CD4-positive, alpha-beta memory T cell (primary cell): ENCODE measurements at regions of chr2 and their contacts with region 1.

Region 1: GRCh38 chr2:72993147-72993932 is 76.0 kb downstream of the EMX1 start:
- DNase-seq: peak; percentile 43 to 57 (median 49)
- H3K4me3 ChIP-seq: no peak overlapping the region
- H3K4me3 Mint-ChIP-seq: no peak overlapping the region
- H3K27ac ChIP-seq: no peak overlapping the region
- H3K27ac Mint-ChIP-seq: no peak overlapping the region
- H3K4me1 ChIP-seq: no peaks in the 10 kb centered on the region
- H3K4me1 Mint-ChIP-seq: no peaks in the 10 kb centered on the region
- H3K27me3 ChIP-seq: no peaks in the 10 kb centered on the region
- H3K27me3 Mint-ChIP-seq: no peaks in the 10 kb centered on the region

Region 2: GRCh38 chr2:73156539-73157124 is 163.3 kb after region 1 on chr2:
- CTCF ChIA-PET with region 1: interaction called, 14 read pairs
- POLR2A ChIA-PET with region 1: no interaction called
- intact Hi-C with region 1: no loop called
- DNase-seq: peak in 3 of 5 donors; percentile 16 to 26 (median 20)
- H3K4me3 ChIP-seq: no peak overlapping the region
- H3K4me3 Mint-ChIP-seq: no peak overlapping the region
- H3K27ac ChIP-seq: no peak overlapping the region
- H3K27ac Mint-ChIP-seq: peak overlapping the region in 2 of 7 donors; percentile 18 to 62
- H3K4me1 ChIP-seq: no peaks in the 10 kb centered on the region
- H3K4me1 Mint-ChIP-seq: peaks cover 0 to 6% (median 0%) of the 10 kb centered on the region in 4 donors
- H3K27me3 ChIP-seq: no peaks in the 10 kb centered on the region
- H3K27me3 Mint-ChIP-seq: peaks cover 27 to 35% of the 10 kb centered on the region in 2 donors

Region 3: DNA sequence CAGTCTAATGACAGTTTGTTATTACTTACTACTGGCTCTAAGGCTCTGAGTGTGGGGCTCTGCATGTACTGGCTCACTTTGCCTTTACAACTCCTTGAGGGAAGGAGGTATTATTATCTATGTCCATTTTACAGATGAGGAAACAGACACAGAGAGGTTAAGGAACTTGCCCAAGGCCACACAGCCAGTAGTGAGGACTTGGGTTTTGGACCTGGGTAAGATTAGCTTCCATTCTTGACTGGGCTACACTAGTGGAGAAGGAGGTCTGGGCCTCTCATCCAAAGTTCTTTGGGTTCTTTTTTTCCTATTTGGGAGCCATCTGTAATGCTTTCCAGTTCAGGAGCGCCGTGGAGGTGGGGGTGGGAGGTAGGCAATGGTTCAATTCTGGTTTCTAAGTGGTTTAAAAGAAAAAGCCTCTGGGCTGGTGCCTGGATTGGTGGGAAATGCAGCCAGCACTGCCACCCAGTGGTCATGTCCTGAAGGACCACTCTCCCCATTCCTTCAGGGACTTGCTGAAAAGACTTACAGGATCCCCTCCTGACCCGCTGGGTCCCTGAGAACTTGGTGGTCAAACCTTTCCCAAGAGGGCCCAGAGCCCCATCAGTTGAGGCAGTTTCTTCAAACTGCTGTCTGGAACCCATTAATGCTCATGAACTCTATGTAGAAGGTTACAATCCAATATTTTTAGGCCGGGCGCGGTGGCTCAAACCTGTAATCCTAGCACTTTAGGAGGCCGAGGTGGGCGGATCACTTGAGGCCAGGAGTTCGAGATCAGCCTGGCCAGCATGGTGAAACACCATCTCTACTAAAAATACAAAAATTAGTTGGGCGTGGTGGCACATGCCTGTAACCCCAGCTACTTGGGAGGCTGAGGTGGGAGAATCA is 170.4 kb after region 1 on chr2:
- CTCF ChIA-PET with region 1: interaction called, 14 read pairs
- POLR2A ChIA-PET with region 1: no interaction called
- intact Hi-C with region 1: loop called (anchors 1 kb)
- DNase-seq: peak in 4 of 5 donors; percentile 54 to 59 (median 57)
- H3K4me3 ChIP-seq: no peak overlapping the region
- H3K4me3 Mint-ChIP-seq: no peak overlapping the region
- H3K27ac ChIP-seq: no peak overlapping the region
- H3K27ac Mint-ChIP-seq: no peak overlapping the region
- H3K4me1 ChIP-seq: no peaks in the 10 kb centered on the region
- H3K4me1 Mint-ChIP-seq: no peaks in the 10 kb centered on the region
- H3K27me3 ChIP-seq: no peaks in the 10 kb centered on the region
- H3K27me3 Mint-ChIP-seq: peaks cover 8 to 14% of the 10 kb centered on the region in 2 donors